Naive thymus-derived CD4-positive, alpha-beta T cell (primary cell): ENCODE measurements at regions of chr7 and their contacts with region 1.

Region 1: DNA sequence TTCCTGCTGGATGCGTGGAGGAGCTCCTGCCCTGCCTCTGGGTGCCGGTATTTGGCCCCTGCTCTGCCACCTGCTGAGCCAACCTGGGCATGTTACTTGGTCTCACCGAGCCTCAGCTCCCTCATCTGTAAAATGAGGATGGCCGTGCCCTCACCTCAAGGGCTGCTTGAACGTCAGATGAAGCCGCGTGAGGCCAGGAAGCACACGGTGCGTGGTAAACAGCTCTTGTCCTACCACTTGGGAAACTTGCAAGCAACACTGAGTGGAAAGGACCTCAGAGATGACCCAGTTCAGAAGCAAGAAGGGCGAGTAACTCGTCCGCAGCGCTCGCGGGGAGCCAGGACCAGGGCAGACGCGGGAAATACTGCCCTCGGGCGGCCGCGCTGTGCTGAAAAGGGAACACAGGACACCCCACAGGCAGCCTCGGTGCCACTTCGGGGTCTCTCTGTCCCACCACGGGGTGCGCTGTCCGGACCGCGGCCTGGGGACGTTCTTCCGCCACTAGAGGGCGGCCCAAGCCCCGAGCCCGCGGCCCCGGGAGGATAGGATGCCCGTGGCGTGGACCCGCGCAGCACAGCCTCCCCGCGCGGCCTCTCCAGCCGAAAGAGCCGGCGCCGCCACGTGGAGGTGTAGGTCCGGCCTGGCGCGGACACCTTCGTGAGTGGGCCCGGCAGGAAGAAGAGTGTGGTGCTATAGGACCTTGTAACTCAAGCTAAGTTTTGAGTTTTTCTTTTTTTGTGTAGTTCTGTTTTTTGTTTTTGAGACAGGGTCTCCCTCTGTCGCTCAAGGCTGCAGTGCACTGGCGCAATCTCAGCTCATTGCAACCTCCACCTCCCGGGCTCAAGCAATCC is 94.1 kb downstream of the PRKAG2 start:
- DNase-seq: peak; percentile 33 to 73 (median 56)
- ATAC-seq: peak; percentile 91
- H3K4me3 ChIP-seq: peak overlapping the region; percentile 57
- H3K4me3 Mint-ChIP-seq: peak overlapping the region; percentile 77 to 95 (median 88)
- H3K27ac ChIP-seq: peak overlapping the region; percentile 53
- H3K27ac Mint-ChIP-seq: peak overlapping the region in 8 of 9 donors; percentile 46 to 93 (median 82)
- H3K4me1 ChIP-seq: peaks cover 0 to 5% of the 10 kb centered on the region in 2 donors
- H3K4me1 Mint-ChIP-seq: peaks cover 10 to 25% (median 16%) of the 10 kb centered on the region in 7 donors
- H3K27me3 ChIP-seq: no peaks in the 10 kb centered on the region
- H3K27me3 Mint-ChIP-seq: peaks cover 0 to 2% (median 0%) of the 10 kb centered on the region in 5 donors

Region 2: GRCh38 chr7:151570366-151570915 is 212.4 kb before region 1 on chr7:
- CTCF ChIA-PET with region 1: interaction called, 3 read pairs
- POLR2A ChIA-PET with region 1: no interaction called
- intact Hi-C with region 1: loop called in 1 of 2 experiments (anchors 1 kb)
- DNase-seq: peak in 3 of 9 donors; percentile 2 to 12 (median 7)
- ATAC-seq: no peak
- H3K4me3 ChIP-seq: no peak overlapping the region
- H3K4me3 Mint-ChIP-seq: no peak overlapping the region
- H3K27ac ChIP-seq: no peak overlapping the region
- H3K27ac Mint-ChIP-seq: no peak overlapping the region
- H3K4me1 ChIP-seq: no peaks in the 10 kb centered on the region
- H3K4me1 Mint-ChIP-seq: peaks cover 0 to under 1% (median 0%) of the 10 kb centered on the region in 7 donors
- H3K27me3 ChIP-seq: no peaks in the 10 kb centered on the region
- H3K27me3 Mint-ChIP-seq: no peaks in the 10 kb centered on the region

Region 3: GRCh38 chr7:151626422-151627115 is 156.3 kb before region 1 on chr7:
- CTCF ChIA-PET with region 1: interaction called, 8 read pairs
- POLR2A ChIA-PET with region 1: no interaction called
- intact Hi-C with region 1: loop called in 1 of 2 experiments (anchors 1 kb)
- DNase-seq: peak in 7 of 9 donors; percentile 16 to 41 (median 22)
- ATAC-seq: peak; percentile 77
- H3K4me3 ChIP-seq: no peak overlapping the region
- H3K4me3 Mint-ChIP-seq: no peak overlapping the region
- H3K27ac ChIP-seq: no peak overlapping the region
- H3K27ac Mint-ChIP-seq: peak overlapping the region in 3 of 9 donors; percentile 34 to 67 (median 39)
- H3K4me1 ChIP-seq: peaks cover 12% of the 10 kb centered on the region in 2 donors
- H3K4me1 Mint-ChIP-seq: peaks cover 39 to 72% (median 59%) of the 10 kb centered on the region in 7 donors
- H3K27me3 ChIP-seq: no peaks in the 10 kb centered on the region
- H3K27me3 Mint-ChIP-seq: no peaks in the 10 kb centered on the region

Region 4: DNA sequence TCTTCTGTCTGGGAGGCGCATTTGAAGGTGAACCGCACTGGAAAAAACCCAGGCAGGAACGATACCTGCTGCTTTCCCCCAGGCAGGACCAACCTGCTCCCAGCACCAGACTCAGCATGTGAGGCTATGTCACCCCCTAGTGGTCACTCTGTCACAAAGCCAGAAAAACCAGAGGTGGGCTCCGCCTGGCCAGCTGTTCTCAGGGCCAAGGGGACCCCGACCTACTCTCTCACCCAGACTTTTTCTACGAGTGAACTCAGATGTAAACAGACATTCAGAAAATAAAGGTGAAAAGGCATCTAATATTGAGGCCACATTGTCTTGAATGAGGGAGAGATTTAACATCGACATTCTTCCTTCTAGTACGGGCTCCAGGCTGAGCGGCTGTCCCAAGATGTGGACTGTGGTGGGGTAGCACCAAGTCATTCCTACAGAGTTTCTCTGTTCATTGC is 23.2 kb before region 1 on chr7:
- CTCF ChIA-PET with region 1: interaction called, 10 read pairs
- POLR2A ChIA-PET with region 1: interaction called, 3 read pairs
- intact Hi-C with region 1: loop called in 1 of 2 experiments (anchors 1 kb)
- DNase-seq: peak in 8 of 9 donors; percentile 38 to 67 (median 58)
- ATAC-seq: peak; percentile 67
- H3K4me3 ChIP-seq: no peak overlapping the region
- H3K4me3 Mint-ChIP-seq: no peak overlapping the region
- H3K27ac ChIP-seq: no peak overlapping the region
- H3K27ac Mint-ChIP-seq: peak overlapping the region in 6 of 9 donors; percentile 8 to 83 (median 56)
- H3K4me1 ChIP-seq: peaks cover 12 to 22% of the 10 kb centered on the region in 2 donors
- H3K4me1 Mint-ChIP-seq: peaks cover 17 to 60% (median 33%) of the 10 kb centered on the region in 7 donors
- H3K27me3 ChIP-seq: no peaks in the 10 kb centered on the region
- H3K27me3 Mint-ChIP-seq: no peaks in the 10 kb centered on the region

Region 5: DNA sequence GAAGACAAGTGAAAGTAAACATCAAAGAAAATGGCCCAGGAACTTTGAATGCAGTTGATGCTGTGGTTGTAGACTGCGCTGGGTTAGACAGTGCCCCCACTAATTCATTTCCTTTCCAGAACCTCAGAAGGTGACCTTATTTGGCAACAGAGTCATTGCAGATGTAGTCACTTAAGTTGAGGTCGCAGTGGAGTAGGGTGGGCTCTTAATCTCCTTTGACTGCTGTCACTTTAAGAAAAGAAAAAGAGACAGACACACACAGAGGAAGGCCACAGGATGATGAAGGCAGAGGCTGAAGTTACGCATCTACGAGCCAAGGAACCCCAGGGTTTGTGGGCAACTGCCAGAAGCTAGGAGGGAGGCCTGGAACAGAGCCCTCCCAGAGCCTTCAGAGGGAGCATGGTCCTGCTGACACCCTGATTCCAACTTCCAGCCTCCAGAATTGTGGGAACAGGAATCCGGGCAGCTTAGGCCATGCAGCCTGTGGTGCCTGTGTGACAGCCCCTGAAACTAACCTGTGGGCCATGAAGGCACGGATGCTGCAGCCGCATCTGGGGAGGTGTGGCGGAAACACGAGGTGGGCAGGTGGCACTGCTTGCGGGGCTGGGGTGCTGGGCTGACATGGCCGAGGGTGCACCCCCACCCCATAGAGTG is 13.5 kb before region 1 on chr7:
- CTCF ChIA-PET with region 1: interaction called, 43 read pairs
- POLR2A ChIA-PET with region 1: no interaction called
- intact Hi-C with region 1: loop called (anchors 1 kb)
- DNase-seq: peak in 7 of 9 donors; percentile 63 to 82 (median 74)
- ATAC-seq: peak; percentile 90
- H3K4me3 ChIP-seq: peak overlapping the region; percentile 52
- H3K4me3 Mint-ChIP-seq: peak overlapping the region; percentile 74 to 88 (median 81)
- H3K27ac ChIP-seq: peak overlapping the region; percentile 81
- H3K27ac Mint-ChIP-seq: peak overlapping the region; percentile 88 to 96 (median 93)
- H3K4me1 ChIP-seq: peaks cover 33 to 43% of the 10 kb centered on the region in 2 donors
- H3K4me1 Mint-ChIP-seq: peaks cover 37 to 86% (median 80%) of the 10 kb centered on the region in 7 donors
- H3K27me3 ChIP-seq: no peaks in the 10 kb centered on the region
- H3K27me3 Mint-ChIP-seq: no peaks in the 10 kb centered on the region

Region 6: DNA sequence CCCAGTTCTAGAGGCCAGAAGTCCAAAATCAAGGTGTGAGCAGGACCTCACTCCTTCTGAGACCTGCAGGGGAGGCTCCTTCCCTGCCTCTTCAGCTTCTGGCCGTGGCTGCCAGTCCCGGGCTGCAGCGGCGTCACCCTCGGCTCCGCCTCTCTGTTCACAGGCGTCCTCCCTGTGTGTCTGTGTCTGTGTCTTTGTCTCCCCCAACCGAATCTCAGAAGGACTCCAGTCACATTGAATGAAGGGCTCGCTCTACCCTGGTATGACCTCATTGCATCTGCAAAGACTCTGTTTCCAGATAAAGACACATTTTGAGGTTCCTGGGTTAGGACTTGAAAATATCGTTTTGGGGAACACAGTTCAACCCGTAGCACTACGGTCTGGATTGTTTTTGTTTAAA is 209.6 kb after region 1 on chr7:
- CTCF ChIA-PET with region 1: no interaction called
- POLR2A ChIA-PET with region 1: no interaction called
- intact Hi-C with region 1: loop called in 1 of 2 experiments (anchors 1 kb)
- DNase-seq: peak in 8 of 9 donors; percentile 14 to 54 (median 44)
- ATAC-seq: peak; percentile 96
- H3K4me3 ChIP-seq: no peak overlapping the region
- H3K4me3 Mint-ChIP-seq: peak overlapping the region in 3 of 10 donors; percentile 3 to 25 (median 18)
- H3K27ac ChIP-seq: no peak overlapping the region
- H3K27ac Mint-ChIP-seq: peak overlapping the region in 2 of 9 donors; percentile 27 to 55
- H3K4me1 ChIP-seq: no peaks in the 10 kb centered on the region
- H3K4me1 Mint-ChIP-seq: peaks cover 0 to 10% (median 7%) of the 10 kb centered on the region in 7 donors
- H3K27me3 ChIP-seq: no peaks in the 10 kb centered on the region
- H3K27me3 Mint-ChIP-seq: peaks cover 14 to 41% (median 30%) of the 10 kb centered on the region in 5 donors